Activated CD4-positive, alpha-beta T cell treated with anti-CD3 and anti-CD28 coated beads for 36 hours (primary cell): ENCODE measurements at regions of chr13 and their contacts with region 1.

Region 1: GRCh38 chr13:21130116-21130515 is 46.2 kb downstream of the SKA3 start:
- DNase-seq: no peak
- ATAC-seq: no peak
- H3K4me3 Mint-ChIP-seq: no peak overlapping the region
- H3K27ac Mint-ChIP-seq: no peak overlapping the region
- H3K4me1 Mint-ChIP-seq: no peaks in the 10 kb centered on the region
- H3K27me3 Mint-ChIP-seq: peaks cover 5% of the 10 kb centered on the region

Region 2: DNA sequence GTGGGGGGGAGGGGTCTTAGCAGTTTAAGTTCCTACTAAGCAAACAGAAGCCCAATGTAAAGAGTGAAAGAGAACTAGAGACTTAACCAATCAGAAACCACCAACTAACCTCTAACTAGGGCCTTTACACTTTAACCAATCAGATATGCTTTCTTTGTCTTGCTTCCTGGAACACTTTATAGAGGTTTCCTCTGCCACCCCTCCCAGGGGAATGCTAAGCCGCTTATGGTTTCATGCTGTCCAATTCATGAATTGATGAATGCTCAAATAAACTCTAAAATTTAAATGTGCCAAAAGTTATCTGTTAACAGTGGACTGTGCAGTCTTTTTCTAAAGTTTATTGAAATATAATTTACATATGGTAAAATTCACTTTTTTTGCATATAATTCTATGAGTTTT is 34.8 kb before region 1 on chr13:
- CTCF ChIA-PET with region 1: no interaction called
- POLR2A ChIA-PET with region 1: no interaction called
- intact Hi-C with region 1: no loop called
- DNase-seq: no peak
- ATAC-seq: no peak
- H3K4me3 Mint-ChIP-seq: no peak overlapping the region
- H3K27ac Mint-ChIP-seq: no peak overlapping the region
- H3K4me1 Mint-ChIP-seq: no peaks in the 10 kb centered on the region
- H3K27me3 Mint-ChIP-seq: no peaks in the 10 kb centered on the region

Region 3: DNA sequence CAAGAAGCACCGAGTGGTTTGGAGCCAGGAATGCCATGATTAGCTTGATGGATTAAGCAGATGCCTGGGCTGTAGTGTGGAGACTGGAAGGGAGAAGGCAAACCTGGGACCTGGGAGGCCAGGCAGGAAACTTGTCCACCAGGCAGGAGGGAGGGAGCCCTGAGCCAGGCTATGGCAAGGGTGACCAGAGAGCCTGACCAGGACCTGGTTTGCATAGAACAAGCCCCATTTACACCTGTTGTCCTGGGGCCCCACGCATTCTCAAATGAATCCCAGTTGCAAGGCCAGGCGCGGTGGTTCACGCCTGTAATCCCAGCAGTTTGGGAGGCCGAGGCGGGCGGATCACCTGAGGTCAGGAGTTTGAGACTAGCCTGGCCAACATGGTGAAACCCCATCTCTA is 18.6 kb before region 1 on chr13:
- CTCF ChIA-PET with region 1: interaction called, 4 read pairs
- POLR2A ChIA-PET with region 1: interaction called, 4 read pairs
- intact Hi-C with region 1: loop called in 1 of 2 experiments (anchors 2 kb)
- DNase-seq: no peak
- ATAC-seq: no peak
- H3K4me3 Mint-ChIP-seq: no peak overlapping the region
- H3K27ac Mint-ChIP-seq: no peak overlapping the region
- H3K4me1 Mint-ChIP-seq: peaks cover 3% of the 10 kb centered on the region
- H3K27me3 Mint-ChIP-seq: no peaks in the 10 kb centered on the region

Region 4: DNA sequence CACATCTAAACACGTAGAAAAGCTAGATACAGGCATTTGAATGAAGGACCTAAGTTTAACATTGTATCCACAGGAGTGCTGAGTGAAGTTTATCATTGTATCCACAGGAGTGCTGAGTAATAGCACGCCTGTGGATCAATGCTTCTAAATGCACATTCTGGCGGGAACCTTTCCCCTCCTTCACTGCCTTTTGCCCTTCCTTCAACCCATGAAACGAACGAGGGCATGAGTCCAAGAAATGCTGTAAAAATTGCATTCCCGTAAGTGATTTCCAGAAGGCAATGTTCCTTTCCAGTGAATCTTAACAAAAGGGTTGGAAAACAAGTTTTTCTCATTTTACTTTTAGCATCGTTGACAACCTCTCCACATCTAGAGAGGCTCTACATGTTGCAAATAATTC is 240.9 kb after region 1 on chr13:
- CTCF ChIA-PET with region 1: no interaction called
- POLR2A ChIA-PET with region 1: no interaction called
- intact Hi-C with region 1: no loop called
- DNase-seq: no peak
- ATAC-seq: no peak
- H3K4me3 Mint-ChIP-seq: no peak overlapping the region
- H3K27ac Mint-ChIP-seq: no peak overlapping the region
- H3K4me1 Mint-ChIP-seq: no peaks in the 10 kb centered on the region
- H3K27me3 Mint-ChIP-seq: no peaks in the 10 kb centered on the region